ENCODE measurements at regions of chr17 and their contacts with region 1.

Region 1: GRCh38 chr17:43576563-43577229 is 30.6 kb upstream of the ETV4 start:
- DNase-seq: peak; percentile 76 to 80
- ATAC-seq: peak; percentile 72 to 88
- H3K4me3 ChIP-seq: no peak overlapping the region
- H3K27ac ChIP-seq: 0 out of 6 replicates have a peak overlapping the region, but pooled peaks of 1 of the 2 experiments have one; percentile 17
- H3K4me1 ChIP-seq: peaks cover 50% of the 10 kb centered on the region
- CTCF ChIP-seq: peak; percentile 99
- EP300 ChIP-seq: no peak
- POLR2A ChIP-seq: no peak
- RAD21 ChIP-seq: peak; percentile 99

Region 2: DNA sequence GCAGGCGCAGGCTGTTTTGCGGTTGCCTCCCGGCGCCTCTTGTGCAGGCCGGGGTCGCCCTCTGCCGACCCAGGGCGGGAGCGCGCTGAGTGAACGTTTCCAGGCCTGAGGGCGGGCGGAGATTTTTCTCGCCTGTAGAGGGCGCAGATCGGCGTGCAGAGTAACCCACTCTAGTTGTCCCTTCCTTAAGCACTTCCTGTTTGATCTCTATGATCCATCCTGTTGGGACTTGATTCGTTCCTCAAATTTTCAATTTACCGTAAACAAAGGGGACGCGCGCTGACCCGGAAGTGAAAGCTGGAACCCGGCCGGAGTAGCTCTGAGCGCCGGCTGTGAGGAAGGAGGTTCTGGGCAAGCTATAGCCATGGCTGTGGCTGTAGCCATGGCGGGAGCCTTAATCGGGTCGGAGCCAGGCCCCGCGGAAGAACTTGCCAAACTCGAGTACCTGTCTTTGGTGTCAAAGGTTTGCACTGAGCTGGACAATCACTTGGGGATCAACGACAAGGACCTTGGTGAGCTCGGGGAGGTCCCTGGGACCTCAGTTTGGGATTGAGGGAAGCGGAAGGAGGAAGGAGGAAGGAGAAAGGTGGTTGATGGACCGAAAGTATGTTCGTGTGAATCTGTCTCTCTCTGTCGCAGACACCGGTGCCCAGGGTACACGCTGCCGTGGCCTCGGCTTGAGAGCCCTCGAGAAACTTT is 92.9 kb before region 1 on chr17 and contains the start of gene DHX8:
- CTCF ChIA-PET with region 1: interaction called, 14 read pairs
- POLR2A ChIA-PET with region 1: no interaction called
- DNase-seq: peak; percentile 99 to 100
- ATAC-seq: peak; percentile 97 to 99
- H3K4me3 ChIP-seq: peak within 1 kb of the TSS; percentile 62
- H3K27ac ChIP-seq: peak within 1 kb of the TSS; percentile 81 to 90
- H3K4me1 ChIP-seq: peaks cover 30% of the 10 kb centered on the region
- CTCF ChIP-seq: peak; percentile 100
- EP300 ChIP-seq: no peak
- POLR2A ChIP-seq: peak; percentile 88
- RAD21 ChIP-seq: peak; percentile 100
- polyA plus RNA-seq, gene DHX8: 66.0 and 70.4 TPM in 2 replicates

Region 3: DNA sequence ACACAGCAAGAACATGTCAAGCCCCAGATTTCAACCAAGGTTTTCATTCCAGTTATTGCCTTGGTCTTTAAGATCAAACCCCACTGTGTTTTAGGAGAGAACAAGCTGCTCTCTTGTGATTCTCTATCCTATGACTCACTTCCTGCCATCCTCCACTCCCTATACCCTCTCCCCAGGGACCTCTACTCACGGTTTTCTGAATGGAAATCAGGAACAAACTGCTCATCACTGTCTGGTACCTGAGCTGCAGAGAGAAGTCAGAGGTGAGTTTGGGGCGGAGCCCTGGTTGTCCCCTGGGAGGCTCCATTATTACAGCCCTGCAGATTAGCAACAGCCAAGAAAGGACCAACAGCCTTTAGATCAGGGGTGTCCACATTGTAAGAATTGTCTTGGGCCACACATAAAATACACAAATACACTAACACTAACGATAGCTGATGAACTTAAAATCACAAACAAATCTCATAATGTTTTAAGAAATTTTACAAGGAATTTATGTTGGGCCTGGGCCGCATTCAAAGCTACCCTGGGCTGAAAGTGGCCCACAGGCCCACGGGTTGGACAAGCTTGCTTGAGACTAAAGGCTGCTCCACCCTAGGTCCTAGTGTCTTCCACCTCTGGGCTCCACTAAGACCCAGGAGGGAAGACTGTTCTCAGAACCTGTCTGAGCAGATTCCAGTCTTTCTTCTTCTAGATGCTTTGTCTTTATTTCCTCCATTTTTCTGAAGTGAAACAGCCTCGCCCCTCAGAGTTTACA is 40.3 kb before region 1 on chr17:
- CTCF ChIA-PET with region 1: interaction called, 30 read pairs
- POLR2A ChIA-PET with region 1: no interaction called
- DNase-seq: no peak
- ATAC-seq: peak; percentile 26 to 44; a peak in 4 of 6 replicates
- H3K4me3 ChIP-seq: no peak overlapping the region
- H3K27ac ChIP-seq: peak overlapping the region; percentile 29 to 59
- H3K4me1 ChIP-seq: peaks cover 30% of the 10 kb centered on the region
- CTCF ChIP-seq: no peak
- EP300 ChIP-seq: no peak
- POLR2A ChIP-seq: no peak
- RAD21 ChIP-seq: no peak

Region 4: DNA sequence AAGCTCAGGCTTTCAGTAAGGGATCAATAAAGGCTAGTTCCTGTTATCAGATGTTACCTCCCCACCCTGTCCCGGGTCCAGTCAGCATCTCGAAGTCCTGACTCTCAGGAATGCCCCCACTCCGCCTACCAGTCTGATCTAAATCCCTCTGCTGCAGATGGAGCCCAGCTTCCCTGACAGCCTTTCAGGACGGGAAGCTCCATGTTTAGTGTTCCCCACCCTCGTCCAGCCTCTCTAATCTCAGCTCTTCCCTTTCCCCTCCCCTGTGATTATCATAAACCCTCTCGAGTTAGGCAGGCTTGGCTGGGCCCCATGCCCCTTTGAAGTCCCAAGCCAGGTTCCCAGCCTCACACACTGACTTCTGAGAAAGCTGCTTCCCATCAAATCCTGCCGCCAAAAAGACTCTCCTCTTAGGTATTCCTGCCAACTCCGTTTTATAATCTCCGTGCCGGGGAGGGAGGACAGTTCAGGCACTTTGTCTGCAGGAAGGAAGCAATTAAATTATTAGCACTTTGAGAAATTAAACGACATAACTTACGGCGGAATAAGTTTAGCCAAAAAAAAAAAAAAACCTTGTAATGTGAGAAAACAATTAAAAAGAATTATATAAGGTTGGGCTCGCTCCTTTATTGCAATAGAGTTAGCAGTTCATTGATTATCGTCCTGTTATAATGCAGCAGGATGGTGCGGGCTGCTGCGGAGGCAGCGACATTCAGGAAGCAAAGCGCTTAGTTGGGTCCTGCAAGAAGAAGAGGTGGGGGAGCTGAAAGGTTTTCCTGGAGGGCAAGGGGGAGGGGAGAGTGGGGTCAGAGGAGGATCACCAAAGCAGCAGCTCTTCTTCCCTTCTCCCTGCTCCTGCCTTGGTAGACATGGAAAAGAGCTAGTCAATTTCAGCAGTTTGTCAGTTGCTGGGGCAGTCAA is 13.8 kb before region 1 on chr17:
- CTCF ChIA-PET with region 1: interaction called, 88 read pairs
- POLR2A ChIA-PET with region 1: no interaction called
- DNase-seq: no peak
- ATAC-seq: no peak
- H3K4me3 ChIP-seq: no peak overlapping the region
- H3K27ac ChIP-seq: no peak overlapping the region; a peak in 1 of 6 replicates
- H3K4me1 ChIP-seq: 0 out of 3 replicates have a peak, but pooled peaks cover 3% of the 10 kb centered on the region
- CTCF ChIP-seq: no peak
- EP300 ChIP-seq: no peak
- POLR2A ChIP-seq: no peak
- RAD21 ChIP-seq: no peak

Region 5: DNA sequence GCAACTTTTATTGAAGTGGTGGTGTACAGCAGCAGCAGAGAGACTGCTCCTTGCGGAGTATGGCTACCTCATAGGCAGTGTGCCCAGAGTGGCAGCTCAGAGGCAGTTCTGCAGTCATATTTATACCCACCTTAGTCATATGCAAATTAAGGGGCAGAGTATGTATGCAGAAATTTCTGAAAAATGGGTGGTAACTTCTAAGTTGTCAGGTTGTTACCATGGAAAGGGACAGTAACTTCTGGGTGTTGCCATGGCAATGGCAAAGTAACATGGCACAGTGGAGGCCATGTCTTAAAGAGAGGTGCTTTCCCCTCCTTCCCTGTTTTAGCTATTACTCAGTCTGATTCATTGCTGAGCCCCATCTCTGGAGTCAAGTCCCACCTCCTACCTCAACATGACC is 31.6 kb after region 1 on chr17:
- CTCF ChIA-PET with region 1: interaction called, 55 read pairs
- POLR2A ChIA-PET with region 1: interaction called, 3 read pairs
- DNase-seq: peak in 1 of 2 experiments; percentile 75
- ATAC-seq: peak; percentile 56 to 75
- H3K4me3 ChIP-seq: no peak overlapping the region
- H3K27ac ChIP-seq: no peak overlapping the region
- H3K4me1 ChIP-seq: 0 out of 3 replicates have a peak, but pooled peaks cover 5% of the 10 kb centered on the region
- CTCF ChIP-seq: no peak
- EP300 ChIP-seq: no peak
- POLR2A ChIP-seq: no peak
- RAD21 ChIP-seq: no peak

Region 6: DNA sequence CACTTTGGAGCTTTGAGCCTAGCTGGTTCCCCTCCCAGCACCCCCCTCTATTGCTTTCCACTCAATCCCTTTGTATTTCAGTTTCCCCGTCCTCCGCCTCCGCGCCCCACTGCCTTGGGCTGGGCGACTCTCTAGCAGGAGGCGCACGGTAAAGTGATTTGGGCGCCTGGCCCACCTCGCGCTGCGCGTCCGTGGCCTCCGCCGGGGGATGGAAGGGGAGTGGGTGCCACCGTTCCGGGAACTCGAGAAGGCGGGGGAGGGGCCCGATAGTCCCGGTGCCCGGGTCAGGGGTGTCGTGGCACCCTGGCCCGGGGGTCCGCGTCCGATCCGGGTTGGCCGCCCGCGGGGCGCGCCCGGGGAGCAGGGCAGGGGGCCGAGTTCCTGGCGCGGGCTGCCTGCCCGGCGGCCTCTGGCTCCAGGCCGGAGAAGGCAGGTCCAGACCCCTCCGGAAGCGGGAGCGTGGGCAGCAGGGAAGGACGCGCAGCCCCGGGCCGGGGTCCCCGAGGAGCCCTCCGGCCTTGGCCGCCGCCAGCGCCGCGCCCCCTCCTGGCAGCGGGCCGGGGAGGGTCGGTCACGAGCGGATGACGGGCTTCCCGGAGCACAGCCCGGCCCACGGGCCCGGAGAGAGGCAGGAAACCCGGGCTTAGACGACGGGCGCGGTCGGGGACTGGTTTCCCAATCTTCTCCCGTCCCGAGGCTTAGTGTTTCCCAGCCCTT is 69.2 kb after region 1 on chr17:
- CTCF ChIA-PET with region 1: interaction called, 207 read pairs
- POLR2A ChIA-PET with region 1: no interaction called
- DNase-seq: no peak
- ATAC-seq: no peak
- H3K4me3 ChIP-seq: no peak overlapping the region
- H3K27ac ChIP-seq: no peak overlapping the region
- H3K4me1 ChIP-seq: no peaks in the 10 kb centered on the region
- CTCF ChIP-seq: no peak
- EP300 ChIP-seq: no peak
- POLR2A ChIP-seq: no peak
- RAD21 ChIP-seq: no peak

Region 7: DNA sequence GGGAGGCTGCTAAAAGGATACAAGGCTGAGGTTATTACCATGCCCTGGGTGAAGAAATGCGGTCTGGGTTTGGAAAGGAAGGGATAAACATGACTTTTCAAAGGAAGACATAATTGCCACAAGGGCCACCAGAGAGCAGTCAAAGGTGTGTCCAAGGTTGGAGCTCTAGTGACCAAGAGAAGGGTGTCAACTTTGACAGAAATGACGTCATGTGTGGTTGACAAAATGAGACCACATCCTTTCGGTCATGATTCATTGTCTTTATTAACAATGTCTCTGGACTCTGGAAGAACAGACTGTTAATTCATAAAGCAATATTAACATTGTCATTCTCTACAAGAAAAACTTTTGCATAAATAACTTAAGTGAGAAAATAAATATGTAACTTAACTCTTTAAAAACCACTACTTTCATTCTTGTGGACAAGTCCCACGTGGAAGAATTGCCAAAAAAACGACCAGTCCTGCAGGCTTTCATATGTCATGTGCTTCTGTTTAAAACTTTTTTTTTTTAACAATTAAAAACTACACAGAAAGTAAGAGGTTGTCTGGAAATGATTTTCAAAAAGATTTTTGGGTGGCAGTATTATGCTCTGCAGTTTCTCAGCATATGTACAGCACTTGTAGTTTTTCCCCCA is 176.9 kb after region 1 on chr17:
- CTCF ChIA-PET with region 1: interaction called, 220 read pairs
- POLR2A ChIA-PET with region 1: no interaction called
- DNase-seq: no peak
- ATAC-seq: no peak
- H3K4me3 ChIP-seq: no peak overlapping the region
- H3K27ac ChIP-seq: no peak overlapping the region
- H3K4me1 ChIP-seq: peaks cover 9% of the 10 kb centered on the region; the same call in 1 of the 3 replicates
- CTCF ChIP-seq: no peak
- EP300 ChIP-seq: no peak
- POLR2A ChIP-seq: no peak
- RAD21 ChIP-seq: no peak